ENCODE measurements at regions of chrX and their contacts with region 1.

Region 1: DNA sequence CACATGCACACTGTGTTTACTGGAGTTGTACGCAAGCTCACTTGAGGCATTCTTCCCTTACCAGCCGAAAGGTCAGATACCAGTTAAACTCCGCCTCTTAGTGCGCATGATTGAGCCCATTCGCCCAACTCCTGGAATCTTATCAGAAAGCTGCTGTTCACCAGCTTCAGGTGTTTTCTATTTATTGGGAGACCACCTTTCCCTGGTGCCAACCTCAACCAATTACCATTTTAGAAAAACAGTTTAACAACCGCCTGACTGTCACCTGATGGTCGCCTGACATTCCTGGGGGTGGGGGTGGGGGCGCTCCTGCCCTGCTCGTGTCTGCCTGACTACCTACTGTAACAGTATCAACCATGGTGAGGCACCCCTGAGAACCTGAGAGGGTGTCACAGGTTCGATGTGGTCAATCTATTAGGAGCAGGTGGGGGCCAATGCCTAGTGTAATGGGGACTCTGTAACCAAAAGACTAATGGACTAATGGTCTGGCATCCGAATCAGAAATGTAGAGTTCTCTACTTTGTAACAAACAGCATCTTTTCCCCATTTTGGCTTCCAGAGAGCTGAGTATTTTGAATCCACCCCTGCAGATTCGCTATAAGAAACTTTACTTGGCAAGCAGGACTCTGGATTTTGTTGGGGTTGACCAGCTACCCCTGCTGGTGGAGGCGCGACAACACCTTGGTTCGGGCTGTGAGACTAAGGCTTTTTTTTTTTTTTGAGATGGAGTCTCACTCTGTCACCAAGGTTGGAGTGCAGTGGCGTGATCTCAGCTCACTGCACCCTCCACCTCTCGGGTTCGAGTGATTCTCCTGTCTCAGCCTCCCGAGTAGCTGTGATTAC is 58.2 kb upstream of the ZNF157 start:
- DNase-seq: peak; percentile 25 to 60 (median 47)
- H3K4me3 ChIP-seq: no peak overlapping the region
- H3K27ac ChIP-seq: no peak overlapping the region
- H3K4me1 ChIP-seq: no peaks in the 10 kb centered on the region
- H3K27me3 ChIP-seq: no peaks in the 10 kb centered on the region
- CTCF ChIP-seq: no peak
- EP300 ChIP-seq: no peak
- POLR2A ChIP-seq: no peak

Region 2: GRCh38 chrX:47112316-47112954 is 199.7 kb before region 1 on chrX:
- intact Hi-C with region 1: no loop called
- DNase-seq: no peak
- H3K4me3 ChIP-seq: no peak overlapping the region
- H3K27ac ChIP-seq: no peak overlapping the region
- H3K4me1 ChIP-seq: no peaks in the 10 kb centered on the region
- H3K27me3 ChIP-seq: no peaks in the 10 kb centered on the region
- CTCF ChIP-seq: no peak
- EP300 ChIP-seq: no peak
- POLR2A ChIP-seq: no peak

Region 3: DNA sequence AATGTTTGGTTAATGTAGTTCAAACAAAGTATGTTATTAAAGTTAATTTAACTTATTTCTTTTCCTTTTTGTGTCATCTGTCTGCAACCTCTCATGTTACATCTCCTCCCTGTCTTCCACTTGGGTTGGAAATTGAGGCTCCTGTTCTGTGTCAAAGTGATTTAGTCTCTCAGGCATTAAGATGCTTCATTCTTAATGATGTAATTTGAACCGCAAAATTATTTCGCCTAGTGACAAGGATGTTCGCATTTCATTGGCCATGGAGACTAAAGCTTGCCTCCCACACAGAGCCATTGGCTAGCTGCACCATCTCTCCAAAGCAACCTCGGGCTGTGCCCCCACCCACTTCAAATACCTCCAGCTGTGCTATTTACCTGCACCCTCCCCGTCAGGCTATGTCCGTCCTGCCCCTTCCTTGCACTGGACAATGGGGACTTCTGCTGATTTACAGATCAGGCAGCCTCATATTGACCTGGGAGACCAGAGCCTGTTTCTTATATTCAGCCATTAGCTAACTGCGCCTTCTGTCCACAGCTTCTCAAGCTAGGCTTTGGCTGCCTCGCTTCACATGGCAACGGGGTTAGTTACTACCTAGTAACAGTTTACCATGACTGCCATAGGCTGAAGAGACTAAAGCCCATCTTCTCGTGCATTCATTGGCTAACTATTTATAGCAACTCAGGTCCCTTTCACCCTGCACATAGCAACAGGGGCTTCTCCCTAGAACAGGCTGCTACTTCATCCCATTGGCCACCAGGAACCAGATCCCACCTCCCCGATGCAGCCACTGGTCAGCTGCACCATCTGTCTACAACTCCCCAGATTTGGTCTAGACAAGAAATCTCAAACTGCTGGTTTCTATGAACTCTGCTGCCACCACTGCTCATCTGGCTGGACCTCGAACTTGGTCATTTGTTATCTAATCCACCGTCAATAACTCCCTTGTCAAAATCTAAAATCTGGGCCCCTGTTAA is 49.7 kb after region 1 on chrX:
- intact Hi-C with region 1: no loop called
- DNase-seq: peak; percentile 35 to 77 (median 53)
- H3K4me3 ChIP-seq: peak overlapping the region; percentile 18
- H3K27ac ChIP-seq: peak overlapping the region in 1 of 2 donors; percentile 16
- H3K4me1 ChIP-seq: no peaks in the 10 kb centered on the region
- H3K27me3 ChIP-seq: no peaks in the 10 kb centered on the region
- CTCF ChIP-seq: no peak
- EP300 ChIP-seq: no peak
- POLR2A ChIP-seq: no peak

Region 4: DNA sequence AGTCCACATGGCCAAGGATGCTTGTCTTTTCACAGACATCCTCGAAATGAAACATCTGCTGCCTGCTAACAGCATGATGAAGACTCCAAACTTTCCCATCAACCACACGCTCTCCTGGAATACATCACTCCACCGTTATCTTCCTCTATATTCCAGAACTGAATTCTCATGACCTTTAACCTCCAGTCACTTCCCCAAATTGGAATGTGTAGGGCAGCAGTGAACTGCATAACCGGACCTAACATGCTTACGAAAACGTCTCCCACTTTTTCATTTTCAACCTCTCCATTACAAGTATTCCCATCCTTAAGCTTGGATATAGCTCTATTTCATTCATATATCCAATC is 201.6 kb after region 1 on chrX:
- intact Hi-C with region 1: no loop called
- DNase-seq: no peak
- H3K4me3 ChIP-seq: peak overlapping the region; percentile 38
- H3K27ac ChIP-seq: no peak overlapping the region
- H3K4me1 ChIP-seq: no peaks in the 10 kb centered on the region
- H3K27me3 ChIP-seq: no peaks in the 10 kb centered on the region
- CTCF ChIP-seq: no peak
- EP300 ChIP-seq: no peak
- POLR2A ChIP-seq: no peak

Region 5: GRCh38 chrX:48058621-48059295 is 746.6 kb after region 1 on chrX:
- intact Hi-C with region 1: loop called in 1 of 4 experiments (anchors 10 kb)
- DNase-seq: no peak
- H3K4me3 ChIP-seq: no peak overlapping the region
- H3K27ac ChIP-seq: no peak overlapping the region
- H3K4me1 ChIP-seq: no peaks in the 10 kb centered on the region
- H3K27me3 ChIP-seq: no peaks in the 10 kb centered on the region
- CTCF ChIP-seq: no peak
- EP300 ChIP-seq: no peak
- POLR2A ChIP-seq: no peak

Measured in ovary (tissue), 10 donors.